ENCODE measurements at regions of chr14 and their contacts with region 1.

Region 1: DNA sequence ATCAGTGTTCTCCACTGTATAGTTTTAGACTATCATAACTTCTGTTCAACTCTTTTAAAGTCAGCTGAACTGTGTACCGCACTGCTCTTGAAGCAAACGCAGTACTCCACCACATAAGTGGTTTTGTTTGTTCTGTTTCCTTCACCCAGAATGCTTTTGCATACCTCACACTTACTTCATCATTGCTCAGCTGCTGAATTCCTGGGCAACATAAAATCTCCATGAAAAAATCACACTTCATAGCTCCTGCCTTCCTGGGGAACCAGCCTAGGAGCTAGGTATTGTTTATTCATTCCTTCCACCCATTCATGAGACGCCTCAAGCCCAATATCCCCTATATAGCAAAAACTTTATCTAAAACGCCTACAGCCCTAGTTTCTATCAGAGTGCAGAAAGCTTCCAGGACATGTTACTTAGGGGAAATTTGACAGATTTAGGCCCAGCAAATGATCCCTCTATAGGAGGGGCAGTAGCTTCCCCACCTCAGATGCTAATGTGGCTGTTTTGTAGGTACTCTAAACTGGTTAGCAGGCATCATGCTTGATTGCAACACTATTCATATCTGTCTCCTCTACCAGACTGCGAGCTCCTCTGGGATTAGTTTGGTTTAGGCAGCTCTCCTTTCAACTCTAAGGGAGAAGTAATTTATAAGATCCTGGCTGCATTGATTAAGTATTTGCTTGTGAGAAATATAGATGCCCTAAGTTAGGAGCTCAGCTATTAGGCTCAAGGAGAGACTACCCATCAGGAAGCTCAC is 44.5 kb downstream of the LRRC9 start:
- DNase-seq: no peak
- H3K4me3 ChIP-seq: no peak overlapping the region
- H3K27ac ChIP-seq: no peak overlapping the region
- H3K4me1 ChIP-seq: no peaks in the 10 kb centered on the region
- H3K27me3 ChIP-seq: no peaks in the 10 kb centered on the region
- CTCF ChIP-seq: no peak

Region 2: GRCh38 chr14:59632381-59632780 is 332.0 kb before region 1 on chr14:
- intact Hi-C with region 1: no loop called
- DNase-seq: peak in 2 of 5 donors; percentile 17 to 18
- H3K4me3 ChIP-seq: no peak overlapping the region
- H3K27ac ChIP-seq: no peak overlapping the region
- H3K4me1 ChIP-seq: no peaks in the 10 kb centered on the region
- H3K27me3 ChIP-seq: peaks cover 5% of the 10 kb centered on the region
- CTCF ChIP-seq: peak; percentile 42

Region 3: GRCh38 chr14:59679872-59680271 is 284.6 kb before region 1 on chr14:
- intact Hi-C with region 1: no loop called
- DNase-seq: peak in 3 of 5 donors; percentile 17 to 46 (median 26)
- H3K4me3 ChIP-seq: no peak overlapping the region
- H3K27ac ChIP-seq: no peak overlapping the region
- H3K4me1 ChIP-seq: no peaks in the 10 kb centered on the region
- H3K27me3 ChIP-seq: no peaks in the 10 kb centered on the region
- CTCF ChIP-seq: no peak

Region 4: DNA sequence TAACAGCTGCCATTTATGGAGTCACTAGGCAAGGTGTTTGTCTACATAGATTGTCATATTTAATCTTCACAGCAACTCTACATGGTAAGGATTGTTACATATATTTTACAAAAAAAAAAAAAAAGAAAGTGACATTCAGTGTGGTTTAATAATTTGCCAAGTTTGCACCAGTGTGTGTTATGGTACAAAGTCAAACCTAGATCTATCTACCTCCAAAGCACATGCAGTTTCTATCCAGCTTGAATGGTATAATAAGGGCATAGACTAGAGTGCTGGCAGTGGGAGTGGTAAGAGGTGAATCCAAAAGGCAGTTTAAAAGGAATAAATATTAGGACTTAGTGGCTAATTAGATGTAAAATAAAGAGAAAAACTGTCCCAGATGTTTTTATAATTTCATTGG is 61.1 kb after region 1 on chr14:
- intact Hi-C with region 1: no loop called
- DNase-seq: peak in 1 of 5 donors; percentile 3
- H3K4me3 ChIP-seq: no peak overlapping the region
- H3K27ac ChIP-seq: no peak overlapping the region
- H3K4me1 ChIP-seq: peaks cover 0 to 8% (median 0%) of the 10 kb centered on the region in 3 donors
- H3K27me3 ChIP-seq: no peaks in the 10 kb centered on the region
- CTCF ChIP-seq: no peak

Region 5: DNA sequence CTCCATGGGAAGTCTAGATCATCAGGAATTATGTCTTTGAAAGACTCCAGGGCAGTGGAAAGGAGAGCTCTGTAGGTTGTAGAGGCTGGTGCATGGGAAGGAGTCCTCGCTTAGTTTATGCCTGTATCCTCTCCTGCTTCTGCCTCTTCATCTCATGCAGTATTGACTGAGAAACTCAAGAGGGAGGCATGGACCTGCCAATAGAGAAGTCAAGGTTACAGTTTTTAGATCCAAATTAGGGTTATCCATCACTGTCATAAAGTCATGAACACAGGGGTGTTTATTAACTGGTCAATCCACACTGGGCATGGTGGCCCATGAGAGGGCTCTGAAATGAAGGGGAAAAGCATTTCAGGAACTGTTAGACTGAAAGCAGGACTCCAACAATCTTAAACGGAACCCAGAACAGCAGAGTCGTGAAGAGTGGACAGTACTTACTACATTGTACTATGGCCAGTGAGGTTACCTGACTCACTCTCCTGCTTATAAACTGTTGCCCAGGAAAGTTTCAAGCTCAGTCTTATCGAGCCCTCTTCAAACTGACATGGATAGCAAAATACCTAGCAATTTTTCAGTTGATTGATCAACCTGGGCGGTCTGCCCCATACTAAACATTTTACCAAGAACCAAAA is 230.9 kb after region 1 on chr14:
- intact Hi-C with region 1: loop called (anchors 10 kb)
- DNase-seq: no peak
- H3K4me3 ChIP-seq: peak overlapping the region in 1 of 3 donors; percentile 25
- H3K27ac ChIP-seq: no peak overlapping the region
- H3K4me1 ChIP-seq: no peaks in the 10 kb centered on the region
- H3K27me3 ChIP-seq: no peaks in the 10 kb centered on the region
- CTCF ChIP-seq: peak; percentile 40

Region 6: GRCh38 chr14:60242429-60242828 is 278.0 kb after region 1 on chr14:
- intact Hi-C with region 1: no loop called
- DNase-seq: no peak
- H3K4me3 ChIP-seq: no peak overlapping the region
- H3K27ac ChIP-seq: no peak overlapping the region
- H3K4me1 ChIP-seq: no peaks in the 10 kb centered on the region
- H3K27me3 ChIP-seq: no peaks in the 10 kb centered on the region
- CTCF ChIP-seq: no peak

Measured in kidney (tissue), 22 donors.